MCF 10A (cell line): ENCODE measurements at regions of chr19 and their contacts with region 1.

Region 1: DNA sequence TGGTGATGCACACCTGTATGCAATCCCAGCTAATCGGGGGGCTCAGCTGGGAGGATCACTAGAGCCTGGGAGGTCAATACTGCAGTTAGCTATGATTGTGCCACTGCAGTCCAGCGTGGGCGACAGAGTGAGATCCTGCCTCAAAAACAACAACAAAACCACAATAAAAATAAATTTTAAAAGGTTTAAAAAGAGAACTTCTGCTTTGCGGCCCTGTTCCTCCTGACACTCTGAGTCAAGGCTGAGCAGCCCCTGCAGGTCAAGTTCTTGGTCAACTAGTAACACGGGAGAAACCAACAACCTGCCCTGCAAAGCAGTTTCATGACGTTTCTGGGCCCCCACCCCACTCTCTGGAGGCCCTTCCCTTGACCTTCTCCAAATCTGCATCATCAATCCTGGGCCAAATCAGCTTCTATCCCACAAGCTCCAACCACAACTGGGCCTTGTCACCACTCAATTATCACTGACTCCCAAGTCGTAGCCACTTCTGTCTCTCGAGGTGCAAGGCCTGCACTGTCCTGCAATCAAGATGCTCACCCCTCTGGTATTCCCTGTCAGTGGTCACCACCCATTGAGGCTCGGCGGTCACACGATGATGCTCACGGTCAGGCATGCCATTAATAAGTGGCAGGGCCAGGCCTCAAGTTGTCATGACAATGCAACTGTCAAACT is 7.5 kb downstream of the ELAVL1 start:
- DNase-seq: no peak
- H3K4me3 Mint-ChIP-seq: no peak overlapping the region
- H3K27ac Mint-ChIP-seq: no peak overlapping the region
- H3K4me1 Mint-ChIP-seq: peaks cover 44% of the 10 kb centered on the region
- H3K27me3 Mint-ChIP-seq: no peaks in the 10 kb centered on the region
- CTCF ChIP-seq: no peak

Region 2: DNA sequence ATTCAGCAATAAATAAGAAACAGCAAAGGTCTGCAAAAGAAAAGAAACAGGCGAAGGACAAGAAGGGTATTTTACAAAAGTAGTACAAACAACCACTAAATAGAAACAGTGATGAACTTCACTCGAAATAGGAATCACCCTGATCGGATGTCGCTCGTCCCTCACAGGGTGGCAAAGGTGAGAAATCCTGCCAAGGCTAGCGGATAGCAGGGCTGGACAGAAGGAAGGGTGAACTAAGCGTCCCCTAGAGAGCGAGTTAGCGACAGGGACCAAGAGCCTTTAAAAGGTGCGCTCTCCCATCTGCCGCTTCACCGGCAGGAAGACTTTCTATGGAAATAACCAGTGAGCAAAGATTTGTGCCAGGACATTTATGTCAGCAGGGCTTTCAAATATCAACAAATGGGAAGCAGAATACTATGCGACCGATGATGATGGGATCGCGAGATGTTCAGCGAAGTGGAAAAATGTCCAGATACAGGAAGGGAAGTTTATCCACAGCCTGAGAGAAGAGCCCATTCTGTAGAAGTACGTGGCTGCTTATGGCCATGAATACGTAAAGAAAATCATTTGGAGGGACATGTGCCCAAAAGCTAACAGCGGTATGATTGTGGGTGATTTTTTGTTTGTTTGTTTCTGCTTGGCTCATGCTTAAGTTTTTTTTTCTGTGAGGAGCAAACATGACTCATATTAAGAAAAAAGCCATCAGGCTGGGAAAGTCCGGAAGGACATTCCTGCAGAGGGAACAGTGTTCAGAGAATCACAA is 11.4 kb before region 1 on chr19:
- CTCF ChIA-PET with region 1: interaction called, 80 read pairs
- POLR2A ChIA-PET with region 1: interaction called, 23 read pairs
- intact Hi-C with region 1: loop called (anchors 2 kb)
- DNase-seq: peak; percentile 71
- H3K4me3 Mint-ChIP-seq: peak overlapping the region; percentile 50
- H3K27ac Mint-ChIP-seq: peak overlapping the region; percentile 95
- H3K4me1 Mint-ChIP-seq: peaks cover 48% of the 10 kb centered on the region
- H3K27me3 Mint-ChIP-seq: no peaks in the 10 kb centered on the region
- CTCF ChIP-seq: no peak